Activated CD8-positive, alpha-beta memory T cell treated with anti-CD3 and anti-CD28 coated beads, Interleukin-2, amount 10 ng/mL, durations not matched to agents 7 days and 5 days (primary cell): ENCODE measurements at regions of chr17 and their contacts with region 1.

Region 1: GRCh38 chr17:8057691-8058114 is 18.8 kb downstream of the ALOX15B start:
- DNase-seq: peak; percentile 71
- ATAC-seq: peak; percentile 79
- H3K4me3 Mint-ChIP-seq: no peak overlapping the region
- H3K27ac Mint-ChIP-seq: no peak overlapping the region
- H3K4me1 Mint-ChIP-seq: peaks cover 28% of the 10 kb centered on the region
- H3K27me3 Mint-ChIP-seq: peaks cover 55% of the 10 kb centered on the region

Region 2: DNA sequence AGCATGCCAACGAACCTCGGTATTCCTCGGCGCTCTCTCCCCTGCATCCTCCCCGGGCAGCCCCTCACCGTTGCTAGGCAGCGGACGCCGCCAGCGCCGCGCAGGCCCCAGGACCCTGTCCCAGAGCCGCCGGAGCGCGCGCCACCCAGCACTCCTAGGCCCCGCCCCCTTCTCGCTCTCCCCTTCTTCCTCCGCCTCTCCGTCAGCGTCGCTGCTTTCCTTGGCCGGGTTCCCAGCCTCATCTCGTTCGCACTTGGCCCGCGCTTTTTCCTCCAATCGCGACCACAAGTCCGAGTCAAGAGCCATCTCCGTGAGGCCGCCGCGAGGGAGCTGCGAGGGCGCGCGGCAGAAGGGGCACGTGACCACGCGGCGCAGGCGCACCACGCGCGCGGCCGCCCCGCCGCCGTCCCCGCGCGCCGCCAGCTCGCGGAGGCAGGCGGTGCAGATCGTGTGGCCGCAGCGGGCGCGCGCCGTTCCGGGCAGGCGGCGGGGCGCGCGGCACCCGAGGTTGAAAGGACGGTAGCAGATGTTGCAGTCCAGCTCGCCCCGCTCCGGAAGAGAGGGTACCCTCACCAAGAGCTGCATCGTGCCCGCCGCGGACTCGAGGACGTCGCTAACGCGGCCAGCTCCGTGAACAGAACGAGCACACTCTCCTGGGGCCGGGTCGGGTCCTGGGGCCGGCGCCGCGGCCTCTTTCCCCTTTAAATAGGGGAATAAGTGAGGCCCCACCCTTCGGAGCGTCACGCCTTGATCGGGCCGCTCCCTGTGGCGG is 141.9 kb before region 1 on chr17 and contains the start of gene RNF227:
- CTCF ChIA-PET with region 1: interaction called, 50 read pairs
- DNase-seq: peak; percentile 89
- ATAC-seq: peak; percentile 87
- H3K4me3 Mint-ChIP-seq: peak within 1 kb of the TSS; percentile 87
- H3K27ac Mint-ChIP-seq: peak within 1 kb of the TSS; percentile 94
- H3K4me1 Mint-ChIP-seq: peaks cover 28% of the 10 kb centered on the region
- H3K27me3 Mint-ChIP-seq: no peaks in the 10 kb centered on the region
- total RNA-seq, gene RNF227: 2.8 to 3.9 TPM

Region 3: GRCh38 chr17:7982666-7983065 is 75.0 kb before region 1 on chr17:
- CTCF ChIA-PET with region 1: interaction called, 71 read pairs
- DNase-seq: no peak
- ATAC-seq: no peak
- H3K4me3 Mint-ChIP-seq: no peak overlapping the region
- H3K27ac Mint-ChIP-seq: no peak overlapping the region
- H3K4me1 Mint-ChIP-seq: peaks cover 6% of the 10 kb centered on the region
- H3K27me3 Mint-ChIP-seq: peaks cover 39% of the 10 kb centered on the region

Region 4: GRCh38 chr17:8016632-8017478 is 40.8 kb before region 1 on chr17:
- CTCF ChIA-PET with region 1: interaction called, 69 read pairs
- DNase-seq: peak; percentile 76
- ATAC-seq: peak; percentile 82
- H3K4me3 Mint-ChIP-seq: peak overlapping the region; percentile 49
- H3K27ac Mint-ChIP-seq: no peak overlapping the region
- H3K4me1 Mint-ChIP-seq: peaks cover 8% of the 10 kb centered on the region
- H3K27me3 Mint-ChIP-seq: peaks cover 39% of the 10 kb centered on the region

Region 5: GRCh38 chr17:8079291-8080207 is 21.8 kb after region 1 on chr17:
- CTCF ChIA-PET with region 1: interaction called, 256 read pairs
- DNase-seq: peak; percentile 85
- ATAC-seq: peak; percentile 86
- H3K4me3 Mint-ChIP-seq: peak overlapping the region; percentile 87
- H3K27ac Mint-ChIP-seq: peak overlapping the region; percentile 81
- H3K4me1 Mint-ChIP-seq: peaks cover 12% of the 10 kb centered on the region
- H3K27me3 Mint-ChIP-seq: peaks cover 20% of the 10 kb centered on the region

Region 6: DNA sequence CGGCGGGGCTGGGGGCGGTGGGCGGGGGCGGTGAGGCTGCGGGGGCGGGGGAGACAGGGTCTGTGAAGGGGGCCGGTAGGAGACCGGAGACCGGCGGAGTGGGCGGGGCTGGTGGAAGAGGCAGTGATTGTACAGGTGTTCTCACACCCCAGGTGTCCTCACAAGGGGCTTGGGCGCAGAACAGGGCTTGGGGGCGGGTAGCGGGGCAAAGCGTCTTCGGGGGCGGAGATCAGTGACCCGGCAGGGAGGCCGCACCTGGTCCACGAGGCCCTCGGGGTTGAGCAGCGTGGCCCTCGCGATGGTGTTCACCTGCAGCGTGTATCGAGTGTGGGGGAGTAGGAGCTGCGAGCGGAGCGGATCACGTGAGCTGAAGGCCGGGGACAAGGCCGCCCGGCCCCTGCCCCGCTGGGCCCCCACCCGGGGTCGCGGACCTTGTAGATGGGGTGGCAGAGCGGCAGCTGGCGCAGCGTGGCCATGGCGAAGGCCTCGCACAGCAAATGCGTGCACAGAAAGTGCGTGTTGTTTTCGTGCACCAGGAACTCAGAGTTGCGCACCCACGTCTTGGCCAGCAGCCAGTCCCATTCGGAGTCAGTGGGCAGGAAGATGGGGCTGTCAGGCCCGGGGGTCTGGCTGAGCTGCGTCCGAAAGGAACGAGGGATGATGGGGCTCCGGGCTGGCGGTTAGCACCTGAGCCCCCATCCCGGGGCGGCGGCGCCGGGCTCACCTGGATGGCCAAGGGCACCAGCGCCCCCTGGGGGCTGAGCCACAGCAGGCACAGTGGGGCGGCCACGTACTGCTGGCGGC is 52.2 kb after region 1 on chr17:
- CTCF ChIA-PET with region 1: interaction called, 96 read pairs
- DNase-seq: peak; percentile 80
- ATAC-seq: peak; percentile 99
- H3K4me3 Mint-ChIP-seq: no peak overlapping the region
- H3K27ac Mint-ChIP-seq: no peak overlapping the region
- H3K4me1 Mint-ChIP-seq: peaks cover 8% of the 10 kb centered on the region
- H3K27me3 Mint-ChIP-seq: peaks cover 37% of the 10 kb centered on the region

Region 7: DNA sequence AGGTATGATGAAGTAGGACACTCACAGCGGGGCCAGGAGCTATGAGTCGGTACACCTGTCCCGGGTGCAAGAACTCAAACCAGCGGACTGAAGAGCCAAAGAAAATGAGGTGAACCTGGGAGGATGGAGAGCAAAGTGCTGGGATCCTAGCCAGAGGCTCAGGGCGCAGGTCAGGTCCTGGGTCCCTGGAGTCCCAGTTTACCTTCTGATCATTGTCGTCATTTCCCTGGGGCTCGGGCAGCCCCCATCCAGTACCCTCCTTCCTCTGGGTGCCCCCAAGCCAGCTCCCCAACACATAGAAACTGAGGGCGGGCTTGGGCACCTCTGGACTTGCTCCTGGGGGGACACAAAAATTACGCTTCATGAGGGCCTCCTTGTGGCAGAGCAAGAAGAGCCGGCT is 174.0 kb after region 1 on chr17:
- CTCF ChIA-PET with region 1: no interaction called
- DNase-seq: no peak
- ATAC-seq: no peak
- H3K4me3 Mint-ChIP-seq: no peak overlapping the region
- H3K27ac Mint-ChIP-seq: no peak overlapping the region
- H3K4me1 Mint-ChIP-seq: peaks cover 8% of the 10 kb centered on the region
- H3K27me3 Mint-ChIP-seq: no peaks in the 10 kb centered on the region

Region 8: DNA sequence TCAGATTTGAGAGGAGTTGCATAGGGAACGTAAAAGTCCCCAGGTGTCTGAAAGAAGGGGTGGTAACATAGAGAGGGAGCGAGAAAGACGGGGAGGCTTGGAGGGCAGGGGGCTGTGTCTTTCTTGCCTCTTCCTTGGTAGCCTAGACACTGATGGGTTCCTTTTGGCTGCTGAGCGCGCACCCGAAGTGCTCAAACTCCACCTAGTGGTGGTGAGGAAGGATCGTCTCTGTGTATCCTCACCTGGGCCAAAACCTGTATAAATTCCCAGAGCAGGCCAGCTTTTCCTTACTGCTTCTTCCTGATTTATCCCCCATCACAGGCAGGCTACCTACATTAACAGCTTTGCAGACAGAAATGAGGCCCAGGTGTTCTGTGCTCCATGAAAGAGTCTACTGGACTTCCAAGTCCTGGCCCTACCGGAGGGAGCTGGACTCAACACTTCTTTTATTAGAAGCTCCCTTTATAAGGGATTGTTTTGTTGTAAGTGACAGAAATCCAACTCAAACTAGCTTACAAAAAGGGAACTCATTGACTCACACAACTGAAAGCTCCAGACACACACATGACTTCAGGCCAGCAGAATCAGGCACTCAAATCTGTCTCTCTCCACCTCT is 243.0 kb after region 1 on chr17:
- CTCF ChIA-PET with region 1: interaction called, 13 read pairs
- DNase-seq: peak; percentile 74
- ATAC-seq: peak; percentile 92
- H3K4me3 Mint-ChIP-seq: no peak overlapping the region
- H3K27ac Mint-ChIP-seq: peak overlapping the region; percentile 58
- H3K4me1 Mint-ChIP-seq: peaks cover 11% of the 10 kb centered on the region
- H3K27me3 Mint-ChIP-seq: no peaks in the 10 kb centered on the region